Transverse colon (tissue), 4 donors: ENCODE measurements at regions of chr4 and their contacts with region 1.

Region 1: GRCh38 chr4:110508827-110509710 is 33.1 kb downstream of the ENPEP start:
- DNase-seq: no peak
- H3K4me3 ChIP-seq: no peak overlapping the region
- H3K27ac ChIP-seq: no peak overlapping the region
- H3K4me1 ChIP-seq: peaks cover 0 to 2% (median 0%) of the 10 kb centered on the region in 4 donors
- H3K27me3 ChIP-seq: no peaks in the 10 kb centered on the region
- CTCF ChIP-seq: peak in 4 of 5 experiments; percentile 23 to 53 (median 36)
- EP300 ChIP-seq: no peak
- POLR2A ChIP-seq: no peak

Region 2: DNA sequence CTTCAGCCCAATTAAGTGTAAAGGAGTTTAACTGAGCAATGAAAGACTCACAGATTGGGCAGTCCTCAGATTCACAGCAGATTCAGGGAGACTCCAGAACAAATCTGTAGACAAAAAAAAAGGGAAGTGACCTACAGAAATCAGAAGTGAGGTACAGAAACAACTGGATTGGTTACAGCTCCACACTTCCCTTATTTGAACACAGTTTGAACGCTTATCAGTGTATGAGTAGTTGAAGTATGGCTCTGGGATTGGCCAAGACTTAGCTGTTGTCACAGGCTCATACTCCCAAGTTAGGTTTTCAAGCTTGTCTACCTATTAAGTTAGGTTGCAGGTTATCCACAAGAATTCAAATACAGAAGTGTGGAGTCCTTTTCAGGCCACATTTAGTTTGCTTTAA is 198.3 kb before region 1 on chr4:
- in situ Hi-C with region 1: loop called in 1 of 4 experiments (anchors 10 kb)
- intact Hi-C with region 1: no loop called
- DNase-seq: no peak
- H3K4me3 ChIP-seq: no peak overlapping the region
- H3K27ac ChIP-seq: no peak overlapping the region
- H3K4me1 ChIP-seq: no peaks in the 10 kb centered on the region
- H3K27me3 ChIP-seq: no peaks in the 10 kb centered on the region
- CTCF ChIP-seq: no peak
- EP300 ChIP-seq: no peak
- POLR2A ChIP-seq: no peak

Region 3: DNA sequence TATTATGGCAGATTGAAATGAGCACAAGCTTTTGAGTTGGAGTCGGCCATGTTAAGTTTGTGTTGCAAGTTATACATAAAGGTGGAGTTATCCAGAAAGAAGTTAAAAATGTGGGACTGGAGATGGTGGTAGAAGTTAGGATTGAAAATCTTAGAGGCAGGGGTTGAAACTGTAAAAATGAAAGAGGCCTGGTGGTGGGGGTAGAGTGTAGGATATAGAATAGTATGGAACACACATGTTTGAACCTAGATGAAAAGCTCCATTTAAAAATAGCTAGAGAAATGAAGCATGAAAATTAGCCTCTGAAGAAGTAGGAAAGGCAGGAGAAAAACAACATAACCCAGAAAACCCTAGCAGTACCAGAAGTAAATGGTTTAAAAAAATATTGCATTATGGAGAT is 164.9 kb before region 1 on chr4:
- in situ Hi-C with region 1: loop called (anchors 10 to 25 kb)
- intact Hi-C with region 1: no loop called
- DNase-seq: peak; percentile 16
- H3K4me3 ChIP-seq: no peak overlapping the region
- H3K27ac ChIP-seq: no peak overlapping the region
- H3K4me1 ChIP-seq: no peaks in the 10 kb centered on the region
- H3K27me3 ChIP-seq: no peaks in the 10 kb centered on the region
- CTCF ChIP-seq: peak; percentile 41 to 73 (median 44)
- EP300 ChIP-seq: no peak
- POLR2A ChIP-seq: no peak